ENCODE measurements at regions of chr4 and their contacts with region 1.

Region 1: DNA sequence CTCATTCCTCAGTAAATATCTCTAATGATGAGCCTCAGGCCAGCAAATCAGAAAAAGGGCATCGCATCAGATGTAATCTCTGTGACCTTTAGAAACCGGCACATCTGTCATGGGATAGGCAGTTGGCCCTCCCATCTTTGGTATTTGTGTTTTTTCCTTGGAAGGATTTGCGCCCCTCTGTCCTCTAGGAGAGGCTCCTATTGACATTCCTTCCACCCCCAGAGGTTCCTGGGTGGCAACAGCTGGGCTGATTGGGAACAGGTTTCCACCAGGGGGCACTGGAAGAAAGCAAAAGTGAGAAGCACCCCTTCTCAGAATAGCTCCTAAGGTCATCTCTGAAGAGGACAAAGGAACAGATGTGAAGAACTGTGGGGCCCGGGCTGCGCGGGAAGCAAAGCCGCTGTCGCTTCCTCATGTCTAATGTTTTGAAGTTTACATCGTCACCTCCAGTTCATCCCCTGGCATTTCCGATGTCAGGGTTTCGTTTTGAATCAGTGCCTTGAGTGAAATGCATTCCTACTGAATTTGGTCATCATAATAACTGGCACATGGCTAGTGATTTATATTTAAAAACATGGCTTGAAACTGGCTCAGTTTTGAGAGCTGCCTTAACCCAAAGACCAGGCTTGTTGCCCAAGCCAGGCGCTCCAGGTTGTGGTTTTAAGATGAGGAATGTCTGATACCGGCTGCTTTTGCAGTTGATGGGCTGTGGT is 6.2 kb downstream of the TXK start:
- DNase-seq: peak; percentile 91
- ATAC-seq: peak; percentile 76
- H3K4me3 Mint-ChIP-seq: peak overlapping the region; percentile 81
- H3K27ac Mint-ChIP-seq: peak overlapping the region; percentile 97
- H3K4me1 Mint-ChIP-seq: peaks cover 88% of the 10 kb centered on the region
- H3K27me3 Mint-ChIP-seq: no peaks in the 10 kb centered on the region

Region 2: DNA sequence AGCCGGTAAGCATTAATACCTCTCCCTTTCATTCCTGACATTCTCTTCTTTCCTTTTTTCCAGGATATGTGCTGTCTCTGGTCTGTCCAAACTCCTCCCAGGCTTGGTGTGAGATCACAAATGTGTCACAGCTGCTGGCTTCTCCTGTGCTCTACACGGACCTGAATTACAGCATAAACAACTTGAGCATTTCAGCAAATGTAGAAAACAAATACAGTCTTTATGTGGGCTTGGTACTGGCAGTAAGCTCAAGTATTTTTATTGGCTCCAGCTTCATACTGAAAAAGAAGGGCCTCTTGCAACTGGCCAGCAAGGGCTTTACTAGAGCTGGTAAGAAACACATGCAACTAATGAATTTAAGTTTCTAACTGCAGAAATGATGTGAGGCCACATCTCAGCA is 102.8 kb before region 1 on chr4:
- CTCF ChIA-PET with region 1: interaction called, 9 read pairs
- POLR2A ChIA-PET with region 1: no interaction called
- intact Hi-C with region 1: loop called in 1 of 2 experiments (anchors 2 kb)
- DNase-seq: no peak
- ATAC-seq: no peak
- H3K4me3 Mint-ChIP-seq: no peak overlapping the region
- H3K27ac Mint-ChIP-seq: no peak overlapping the region
- H3K4me1 Mint-ChIP-seq: peaks cover 38% of the 10 kb centered on the region
- H3K27me3 Mint-ChIP-seq: peaks cover 11% of the 10 kb centered on the region

Region 3: GRCh38 chr4:48103483-48104139 is 24.2 kb before region 1 on chr4:
- CTCF ChIA-PET with region 1: interaction called, 41 read pairs
- POLR2A ChIA-PET with region 1: interaction called, 4 read pairs
- intact Hi-C with region 1: loop called (anchors 1 kb)
- DNase-seq: peak; percentile 44
- ATAC-seq: peak; percentile 92
- H3K4me3 Mint-ChIP-seq: no peak overlapping the region
- H3K27ac Mint-ChIP-seq: peak overlapping the region; percentile 89
- H3K4me1 Mint-ChIP-seq: peaks cover 38% of the 10 kb centered on the region
- H3K27me3 Mint-ChIP-seq: no peaks in the 10 kb centered on the region

Region 4: DNA sequence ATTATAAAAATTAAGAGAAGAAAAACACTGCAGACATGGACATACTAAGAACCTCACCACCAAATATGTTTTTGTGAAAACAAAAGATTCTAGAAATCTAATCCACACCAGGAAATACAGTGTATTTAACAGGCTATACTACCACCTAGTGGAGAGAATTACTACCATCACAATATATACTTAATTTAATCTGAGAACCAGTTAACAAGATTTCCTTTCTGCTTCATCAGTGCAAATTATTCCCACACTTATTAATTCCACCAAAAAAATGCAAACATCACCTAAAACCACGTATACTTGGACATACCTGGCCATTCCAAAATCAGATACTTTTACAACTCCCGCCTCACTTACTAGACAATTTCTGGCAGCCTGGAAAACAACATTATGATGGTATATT is 13.2 kb after region 1 on chr4:
- CTCF ChIA-PET with region 1: interaction called, 82 read pairs
- POLR2A ChIA-PET with region 1: interaction called, 19 read pairs
- intact Hi-C with region 1: loop called (anchors 1 kb)
- DNase-seq: no peak
- ATAC-seq: peak; percentile 44
- H3K4me3 Mint-ChIP-seq: no peak overlapping the region
- H3K27ac Mint-ChIP-seq: no peak overlapping the region
- H3K4me1 Mint-ChIP-seq: peaks cover 47% of the 10 kb centered on the region
- H3K27me3 Mint-ChIP-seq: no peaks in the 10 kb centered on the region

Region 5: DNA sequence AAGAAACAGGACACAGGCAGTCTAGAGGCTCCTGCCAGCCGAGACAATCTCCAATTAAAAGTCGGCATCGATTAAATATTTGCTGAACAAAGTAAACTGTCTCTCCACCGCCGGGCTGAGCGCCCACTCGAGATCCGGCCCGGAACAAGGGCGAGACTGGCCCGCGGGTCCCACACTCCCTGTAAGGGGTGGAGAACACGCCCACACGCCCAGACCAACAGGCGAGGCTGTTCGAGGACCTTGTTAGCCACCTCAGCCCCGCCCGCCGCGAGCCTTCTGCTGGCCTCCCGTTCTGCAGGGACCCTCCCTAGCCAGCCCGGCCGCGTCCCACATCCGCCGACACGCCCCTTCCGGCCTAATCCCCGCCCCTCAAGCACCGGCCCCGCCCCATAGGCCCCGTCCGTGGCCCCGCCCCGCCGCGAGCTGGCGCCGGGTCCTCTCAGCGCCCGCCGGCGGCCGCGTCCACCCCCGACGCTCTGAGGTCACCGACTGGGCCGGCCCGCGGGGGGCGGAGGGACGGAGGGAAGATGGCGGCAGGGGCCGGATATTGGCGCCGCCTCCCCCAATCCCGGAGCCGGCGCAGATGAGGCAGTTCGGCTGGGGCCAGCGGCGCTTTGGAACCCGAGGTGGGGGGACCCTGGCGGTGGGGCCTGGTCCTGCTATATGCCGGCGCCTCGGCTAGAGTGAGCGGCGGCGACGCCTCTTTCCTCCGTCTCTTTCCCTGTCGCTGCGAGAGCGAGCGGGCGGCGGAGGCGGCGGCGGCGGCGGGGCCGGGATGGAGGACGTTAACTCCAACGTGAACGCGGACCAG is 213.3 kb after region 1 on chr4 and contains the start of gene SLAIN2:
- CTCF ChIA-PET with region 1: no interaction called
- POLR2A ChIA-PET with region 1: no interaction called
- intact Hi-C with region 1: loop called (anchors 1 to 2 kb)
- DNase-seq: peak; percentile 99
- ATAC-seq: peak; percentile 85
- H3K4me3 Mint-ChIP-seq: peak within 1 kb of the TSS; percentile 98
- H3K27ac Mint-ChIP-seq: peak within 1 kb of the TSS; percentile 98
- H3K4me1 Mint-ChIP-seq: peaks cover 62% of the 10 kb centered on the region
- H3K27me3 Mint-ChIP-seq: no peaks in the 10 kb centered on the region
- total RNA-seq, gene SLAIN2: 55.7 to 140 TPM